ENCODE measurements at regions of chr9 and their contacts with region 1.

Region 1: DNA sequence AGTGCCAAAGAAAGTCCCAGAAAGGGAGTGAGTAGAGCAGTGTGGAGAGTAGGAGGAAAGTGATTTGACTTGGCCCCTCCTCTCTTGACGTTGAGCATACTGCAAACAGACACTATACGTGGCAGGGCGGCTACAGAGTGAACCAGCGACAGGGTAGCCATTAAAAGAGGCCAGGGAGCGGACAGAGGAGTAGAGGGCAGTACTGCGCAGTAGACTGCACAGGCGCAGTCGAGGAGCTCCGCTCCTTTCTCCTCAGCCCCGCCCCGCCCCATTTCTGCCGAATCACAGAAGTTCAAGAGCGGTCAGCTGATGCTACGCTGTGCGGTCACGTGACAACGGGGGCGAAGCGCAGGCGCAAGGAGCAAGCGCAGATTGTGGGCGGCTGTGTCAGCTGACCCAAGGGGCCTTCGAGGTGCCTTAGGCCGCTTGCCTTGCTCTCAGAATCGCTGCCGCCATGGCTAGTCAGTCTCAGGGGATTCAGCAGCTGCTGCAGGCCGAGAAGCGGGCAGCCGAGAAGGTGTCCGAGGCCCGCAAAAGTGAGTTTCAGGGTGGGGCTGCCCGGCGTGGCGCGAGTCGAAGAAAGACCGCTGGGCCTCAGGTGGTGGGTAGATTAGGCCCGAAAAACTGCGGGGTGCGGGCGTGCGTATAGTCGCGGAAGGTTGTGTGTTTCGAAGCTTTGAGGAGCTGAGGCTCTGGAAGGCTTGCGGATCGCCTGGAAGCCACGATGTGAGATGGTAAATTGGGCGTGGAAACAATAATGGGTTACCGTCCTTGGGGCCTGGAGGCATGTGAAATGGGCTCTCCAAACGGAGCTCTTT is at the start of gene ATP6V1G1:
- DNase-seq: peak; percentile 95 to 99 (median 97)
- H3K4me3 ChIP-seq: peak within 1 kb of the TSS; percentile 47 to 82
- H3K4me3 Mint-ChIP-seq: peak within 1 kb of the TSS; percentile 96 to 99 (median 99)
- H3K27ac ChIP-seq: peak within 1 kb of the TSS; percentile 93
- H3K27ac Mint-ChIP-seq: peak within 1 kb of the TSS; percentile 98 to 100 (median 99)
- H3K4me1 ChIP-seq: peaks cover 47% of the 10 kb centered on the region
- H3K4me1 Mint-ChIP-seq: peaks cover 35 to 56% (median 45%) of the 10 kb centered on the region in 4 donors
- H3K27me3 ChIP-seq: no peaks in the 10 kb centered on the region
- H3K27me3 Mint-ChIP-seq: no peaks in the 10 kb centered on the region
- total RNA-seq, gene ATP6V1G1: 121 TPM

Region 2: GRCh38 chr9:113516840-113517577 is 1070.6 kb before region 1 on chr9:
- CTCF ChIA-PET with region 1: no interaction called
- POLR2A ChIA-PET with region 1: no interaction called
- intact Hi-C with region 1: no loop called
- DNase-seq: peak; percentile 60 to 84 (median 67)
- H3K4me3 ChIP-seq: peak overlapping the region; percentile 64 to 76
- H3K4me3 Mint-ChIP-seq: peak overlapping the region; percentile 92 to 98 (median 94)
- H3K27ac ChIP-seq: peak overlapping the region; percentile 82
- H3K27ac Mint-ChIP-seq: peak overlapping the region; percentile 95 to 98 (median 96)
- H3K4me1 ChIP-seq: peaks cover 96% of the 10 kb centered on the region
- H3K4me1 Mint-ChIP-seq: peaks cover 68 to 96% (median 83%) of the 10 kb centered on the region in 4 donors
- H3K27me3 ChIP-seq: no peaks in the 10 kb centered on the region
- H3K27me3 Mint-ChIP-seq: no peaks in the 10 kb centered on the region

Region 3: GRCh38 chr9:114348906-114349482 is 238.6 kb before region 1 on chr9:
- CTCF ChIA-PET with region 1: no interaction called
- POLR2A ChIA-PET with region 1: no interaction called
- intact Hi-C with region 1: loop called (anchors 10 kb)
- DNase-seq: peak in 3 of 5 donors; percentile 36 to 82 (median 37)
- H3K4me3 ChIP-seq: no peak overlapping the region
- H3K4me3 Mint-ChIP-seq: peak overlapping the region in 6 of 8 donors; percentile 17 to 47 (median 31)
- H3K27ac ChIP-seq: peak overlapping the region; percentile 30
- H3K27ac Mint-ChIP-seq: peak overlapping the region; percentile 84 to 95 (median 92)
- H3K4me1 ChIP-seq: peaks cover 42% of the 10 kb centered on the region
- H3K4me1 Mint-ChIP-seq: peaks cover 28 to 51% (median 35%) of the 10 kb centered on the region in 4 donors
- H3K27me3 ChIP-seq: no peaks in the 10 kb centered on the region
- H3K27me3 Mint-ChIP-seq: no peaks in the 10 kb centered on the region

Region 4: DNA sequence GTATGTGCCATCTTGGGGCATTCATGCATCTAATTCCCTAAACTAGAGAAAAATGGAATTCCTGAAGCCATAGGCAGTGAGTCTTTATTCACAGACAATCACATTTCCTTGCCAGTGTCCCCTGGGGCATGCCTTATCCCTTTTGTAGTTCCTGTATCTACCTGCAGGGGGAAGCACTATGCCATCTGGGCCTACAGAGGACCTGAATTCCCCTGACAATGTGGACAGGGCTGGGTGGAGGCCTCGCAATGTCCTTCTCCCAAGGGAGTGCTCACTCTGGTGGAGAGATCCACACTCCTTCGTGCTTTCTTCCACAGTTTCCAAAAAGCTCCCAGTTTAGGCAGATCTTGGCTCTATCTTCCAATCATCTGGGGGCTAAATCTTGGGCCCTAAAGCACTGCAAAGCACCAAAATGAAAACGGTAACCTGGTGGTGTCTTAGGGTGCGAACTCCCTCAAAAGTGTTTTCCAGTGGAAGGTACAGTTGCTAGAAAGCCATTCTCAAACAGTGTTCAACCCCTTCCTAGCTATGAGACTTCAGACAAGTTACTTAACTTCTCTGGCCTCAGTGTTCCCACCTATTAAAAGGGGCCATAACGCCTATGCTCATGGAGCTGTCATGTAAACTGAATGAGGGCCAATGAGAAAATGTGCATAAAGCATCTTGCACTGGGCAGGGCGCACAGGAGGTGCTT is 99.8 kb before region 1 on chr9:
- CTCF ChIA-PET with region 1: interaction called, 35 read pairs
- POLR2A ChIA-PET with region 1: interaction called, 7 read pairs
- intact Hi-C with region 1: loop called (anchors 1 kb)
- DNase-seq: peak; percentile 66 to 75 (median 70)
- H3K4me3 ChIP-seq: no peak overlapping the region
- H3K4me3 Mint-ChIP-seq: no peak overlapping the region
- H3K27ac ChIP-seq: no peak overlapping the region
- H3K27ac Mint-ChIP-seq: peak overlapping the region in 2 of 7 donors; percentile 24 to 55
- H3K4me1 ChIP-seq: peaks cover 14% of the 10 kb centered on the region
- H3K4me1 Mint-ChIP-seq: peaks cover 12 to 35% (median 19%) of the 10 kb centered on the region in 4 donors
- H3K27me3 ChIP-seq: no peaks in the 10 kb centered on the region
- H3K27me3 Mint-ChIP-seq: peaks cover 0 to 4% of the 10 kb centered on the region in 2 donors

Region 5: GRCh38 chr9:114526807-114527206 is 60.8 kb before region 1 on chr9:
- CTCF ChIA-PET with region 1: no interaction called
- POLR2A ChIA-PET with region 1: no interaction called
- intact Hi-C with region 1: no loop called
- DNase-seq: no peak
- H3K4me3 ChIP-seq: no peak overlapping the region
- H3K4me3 Mint-ChIP-seq: no peak overlapping the region
- H3K27ac ChIP-seq: no peak overlapping the region
- H3K27ac Mint-ChIP-seq: no peak overlapping the region
- H3K4me1 ChIP-seq: no peaks in the 10 kb centered on the region
- H3K4me1 Mint-ChIP-seq: no peaks in the 10 kb centered on the region
- H3K27me3 ChIP-seq: peaks cover 2% of the 10 kb centered on the region
- H3K27me3 Mint-ChIP-seq: peaks cover 14 to 29% of the 10 kb centered on the region in 2 donors

Region 6: DNA sequence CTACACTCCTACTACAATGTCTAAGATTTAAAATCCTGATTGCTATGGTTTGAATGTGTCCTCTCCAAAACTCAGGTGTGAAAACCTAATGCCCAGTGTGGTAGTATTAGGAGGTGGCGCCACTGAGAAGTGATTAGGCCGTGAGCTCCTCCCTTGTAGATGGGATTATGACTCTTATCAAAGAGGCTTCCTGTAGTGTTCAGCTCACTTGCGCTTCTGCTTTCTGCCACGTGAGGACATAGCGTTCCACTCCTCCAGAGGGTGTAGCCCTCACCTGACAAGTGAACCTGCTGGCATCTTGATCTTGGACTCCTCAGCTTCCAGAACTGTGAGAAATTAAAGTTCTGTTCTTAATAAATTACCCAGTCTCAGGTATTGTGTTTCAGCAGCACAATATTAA is 49.4 kb before region 1 on chr9:
- CTCF ChIA-PET with region 1: interaction called, 16 read pairs
- POLR2A ChIA-PET with region 1: no interaction called
- intact Hi-C with region 1: no loop called
- DNase-seq: peak in 4 of 5 donors; percentile 17 to 34 (median 21)
- H3K4me3 ChIP-seq: no peak overlapping the region
- H3K4me3 Mint-ChIP-seq: no peak overlapping the region
- H3K27ac ChIP-seq: no peak overlapping the region
- H3K27ac Mint-ChIP-seq: peak overlapping the region in 5 of 7 donors; percentile 8 to 37 (median 24)
- H3K4me1 ChIP-seq: no peaks in the 10 kb centered on the region
- H3K4me1 Mint-ChIP-seq: peaks cover 4 to 8% (median 5%) of the 10 kb centered on the region in 4 donors
- H3K27me3 ChIP-seq: no peaks in the 10 kb centered on the region
- H3K27me3 Mint-ChIP-seq: peaks cover 0 to 2% of the 10 kb centered on the region in 2 donors

Region 7: DNA sequence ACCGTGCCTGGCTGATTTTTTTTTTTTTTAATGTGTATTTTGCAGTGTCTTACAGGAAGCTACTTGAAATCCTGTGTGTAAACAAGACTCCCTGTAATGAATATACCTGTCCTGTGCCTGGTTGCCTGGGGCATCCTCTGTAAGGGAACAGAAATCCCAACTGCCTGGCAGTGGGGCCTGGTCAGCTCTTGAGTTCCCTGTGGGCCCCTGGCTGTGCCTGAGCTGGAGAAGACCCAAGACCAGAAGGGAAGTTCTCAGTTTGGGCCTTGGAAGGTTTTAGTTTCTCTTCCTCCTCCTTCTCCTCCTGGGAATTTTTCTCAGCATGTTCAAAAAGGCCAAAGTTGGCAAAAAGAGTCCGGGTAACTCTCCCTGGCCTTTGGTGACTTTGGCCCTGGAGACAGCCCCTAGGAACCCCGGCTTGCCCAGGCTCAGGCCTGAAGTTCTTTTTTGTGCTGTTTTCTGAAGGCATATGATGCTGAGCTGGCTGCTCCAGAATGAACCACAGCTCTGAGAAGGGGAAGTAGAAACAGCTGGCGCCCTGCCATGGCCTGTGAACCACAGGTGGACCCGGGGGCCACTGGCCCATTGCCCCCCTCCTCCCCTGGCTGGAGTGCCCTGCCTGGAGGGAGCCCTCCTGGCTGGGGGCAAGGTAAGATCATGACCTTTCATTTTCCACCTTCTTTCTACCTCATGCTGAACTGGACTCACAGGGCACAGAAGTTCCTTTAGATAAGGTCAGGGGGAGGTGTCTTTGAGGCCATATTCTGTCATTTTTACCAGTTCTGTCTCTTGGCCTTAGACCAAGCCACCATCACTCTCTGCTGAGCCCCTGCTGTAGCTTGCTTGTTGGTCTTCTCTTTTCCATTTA is 29.3 kb after region 1 on chr9:
- CTCF ChIA-PET with region 1: interaction called, 75 read pairs
- POLR2A ChIA-PET with region 1: interaction called, 244 read pairs
- intact Hi-C with region 1: no loop called
- DNase-seq: no peak
- H3K4me3 ChIP-seq: no peak overlapping the region
- H3K4me3 Mint-ChIP-seq: peak overlapping the region in 4 of 8 donors; percentile 39 to 69 (median 63)
- H3K27ac ChIP-seq: no peak overlapping the region
- H3K27ac Mint-ChIP-seq: peak overlapping the region; percentile 65 to 89 (median 84)
- H3K4me1 ChIP-seq: peaks cover 34% of the 10 kb centered on the region
- H3K4me1 Mint-ChIP-seq: peaks cover 28 to 54% (median 42%) of the 10 kb centered on the region in 4 donors
- H3K27me3 ChIP-seq: no peaks in the 10 kb centered on the region
- H3K27me3 Mint-ChIP-seq: no peaks in the 10 kb centered on the region

Region 8: DNA sequence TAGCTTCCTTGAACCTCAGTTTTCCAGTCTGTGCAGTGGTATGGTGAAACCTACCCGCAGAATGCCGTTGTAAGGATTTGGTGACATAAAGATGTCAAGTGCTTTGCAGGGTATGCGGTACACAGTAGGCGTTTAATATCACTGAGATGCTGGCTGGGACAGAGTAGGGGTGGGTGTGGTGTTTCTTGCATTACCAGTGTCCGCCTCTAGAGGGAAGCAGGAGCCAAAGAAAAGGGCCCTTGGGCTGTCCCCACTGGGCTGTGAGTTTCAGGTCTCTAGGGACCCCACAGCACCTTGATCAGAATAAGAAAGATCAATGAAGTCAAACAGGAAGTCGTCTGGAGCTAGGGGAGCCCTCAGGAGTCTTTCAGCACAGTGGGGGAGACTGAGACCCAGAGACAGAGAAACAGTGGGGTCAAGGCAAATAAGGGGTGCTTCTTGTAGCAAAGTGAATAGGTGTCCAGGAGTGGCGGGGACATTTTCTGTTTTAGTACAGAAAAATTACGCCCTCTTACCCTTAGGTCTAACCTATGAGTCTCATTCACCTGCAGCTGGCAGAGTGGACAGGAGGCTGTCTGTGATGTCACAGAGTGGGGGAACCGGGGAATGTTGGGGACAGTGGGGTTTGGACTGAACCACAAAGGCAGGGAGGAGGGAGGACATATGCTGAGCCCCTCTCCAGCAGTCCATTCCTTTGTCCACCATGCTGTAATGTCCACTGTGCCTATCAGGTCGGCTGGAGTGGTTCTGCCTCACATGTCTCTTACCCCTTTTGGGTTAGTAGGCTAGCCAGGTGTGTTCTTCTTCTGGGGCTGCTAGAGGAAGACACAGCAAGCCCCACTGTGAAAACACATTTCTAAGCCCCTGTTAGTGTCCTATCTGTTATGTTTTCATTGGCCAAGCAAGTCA is 74.7 kb after region 1 on chr9:
- CTCF ChIA-PET with region 1: interaction called, 10 read pairs
- POLR2A ChIA-PET with region 1: no interaction called
- intact Hi-C with region 1: no loop called
- DNase-seq: peak; percentile 45 to 52 (median 50)
- H3K4me3 ChIP-seq: no peak overlapping the region
- H3K4me3 Mint-ChIP-seq: no peak overlapping the region
- H3K27ac ChIP-seq: no peak overlapping the region
- H3K27ac Mint-ChIP-seq: no peak overlapping the region
- H3K4me1 ChIP-seq: no peaks in the 10 kb centered on the region
- H3K4me1 Mint-ChIP-seq: peaks cover 0 to 1% (median 0%) of the 10 kb centered on the region in 4 donors
- H3K27me3 ChIP-seq: no peaks in the 10 kb centered on the region
- H3K27me3 Mint-ChIP-seq: peaks cover 7% of the 10 kb centered on the region in 2 donors

Region 9: GRCh38 chr9:114889802-114890251 is 302.2 kb after region 1 on chr9:
- CTCF ChIA-PET with region 1: no interaction called
- POLR2A ChIA-PET with region 1: no interaction called
- intact Hi-C with region 1: no loop called
- DNase-seq: no peak
- H3K4me3 ChIP-seq: no peak overlapping the region
- H3K4me3 Mint-ChIP-seq: peak overlapping the region in 5 of 8 donors; percentile 12 to 65 (median 40)
- H3K27ac ChIP-seq: no peak overlapping the region
- H3K27ac Mint-ChIP-seq: peak overlapping the region in 6 of 7 donors; percentile 19 to 82 (median 46)
- H3K4me1 ChIP-seq: peaks cover 49% of the 10 kb centered on the region
- H3K4me1 Mint-ChIP-seq: peaks cover 38 to 65% (median 49%) of the 10 kb centered on the region in 4 donors
- H3K27me3 ChIP-seq: no peaks in the 10 kb centered on the region
- H3K27me3 Mint-ChIP-seq: no peaks in the 10 kb centered on the region